Dorsolateral prefrontal cortex (tissue), 120 donors: ENCODE measurements at regions of chr14 and their contacts with region 1.

Region 1: DNA sequence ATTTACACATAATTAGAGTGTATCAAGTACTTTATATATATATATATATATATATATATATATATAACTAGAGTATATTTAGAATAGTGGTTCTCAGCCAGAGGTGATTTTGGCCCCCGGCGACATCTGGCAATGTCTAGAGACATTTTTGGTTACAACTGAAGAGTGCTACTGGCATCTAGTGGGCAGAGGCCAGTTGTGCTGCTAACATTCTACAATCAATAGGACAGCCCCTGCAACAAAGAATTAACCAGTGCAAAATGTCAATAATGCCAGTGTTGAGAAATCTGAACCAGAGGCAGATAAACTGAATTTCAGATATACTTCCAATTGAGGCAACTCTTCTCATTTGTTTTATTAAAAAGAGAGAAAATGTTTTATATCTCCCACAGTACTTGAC is 8.9 kb downstream of the GTF2A1 start:
- DNase-seq: peak in 4 of 10 donors; percentile 41 to 68 (median 52)
- H3K4me3 ChIP-seq: no peak overlapping the region
- H3K27ac ChIP-seq: peak overlapping the region in 5 of 59 donors; percentile 5 to 44 (median 18)
- H3K27me3 ChIP-seq: no peaks in the 10 kb centered on the region
- CTCF ChIP-seq: peak in 54 of 56 donors; percentile 26 to 76 (median 56)

Region 2: GRCh38 chr14:80024417-80024816 is 1187.4 kb before region 1 on chr14:
- intact Hi-C with region 1: no loop called
- DNase-seq: no peak
- H3K4me3 ChIP-seq: no peak overlapping the region
- H3K27ac ChIP-seq: no peak overlapping the region
- H3K27me3 ChIP-seq: no peaks in the 10 kb centered on the region
- CTCF ChIP-seq: no peak

Region 3: DNA sequence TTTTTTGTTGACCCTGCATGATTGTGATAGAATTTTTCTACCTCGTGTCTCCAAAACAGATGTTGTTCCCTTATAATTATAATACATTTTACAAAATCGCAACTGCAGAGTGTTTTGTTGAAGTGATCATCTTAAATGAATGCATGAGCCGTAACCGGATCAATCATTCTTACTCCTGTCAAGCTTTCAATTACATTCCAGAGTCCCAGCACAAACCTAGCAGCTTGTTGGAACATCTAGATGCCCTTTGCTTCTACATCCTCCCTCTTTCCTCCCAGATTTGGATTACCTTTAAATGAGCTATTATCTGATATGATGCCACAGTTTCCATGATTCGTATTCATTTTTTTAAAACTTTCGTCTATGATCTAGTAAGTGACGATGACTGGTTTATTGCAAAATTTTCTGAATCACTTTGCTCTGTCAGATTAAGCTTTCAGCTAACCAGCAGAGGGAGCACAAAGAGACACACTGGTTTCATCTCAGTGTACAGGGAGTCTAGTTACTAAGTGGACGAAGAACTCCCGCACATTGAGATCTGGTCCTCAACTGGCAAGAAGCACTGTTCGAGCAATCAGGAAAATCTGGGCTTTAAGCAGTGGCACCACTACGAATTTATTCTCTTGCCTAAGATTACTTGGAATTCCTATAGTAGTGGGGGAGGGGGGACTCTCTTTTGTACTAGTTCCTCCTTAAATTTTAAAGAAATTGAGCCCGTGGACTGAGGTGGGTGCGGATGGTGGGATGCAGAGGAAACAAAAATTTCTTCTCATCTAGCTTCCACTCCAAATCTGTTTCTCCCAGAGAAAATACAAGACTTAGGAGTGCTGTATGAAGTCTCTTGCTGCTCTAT is 215.6 kb before region 1 on chr14:
- intact Hi-C with region 1: loop called (anchors 5 kb)
- DNase-seq: peak in 3 of 10 donors; percentile 7 to 28 (median 9)
- H3K4me3 ChIP-seq: peak overlapping the region in 21 of 59 donors; percentile 3 to 48 (median 24)
- H3K27ac ChIP-seq: no peak overlapping the region
- H3K27me3 ChIP-seq: peaks cover 0 to 12% (median 0%) of the 10 kb centered on the region in 45 donors
- CTCF ChIP-seq: peak; percentile 48 to 83 (median 69)

Region 4: DNA sequence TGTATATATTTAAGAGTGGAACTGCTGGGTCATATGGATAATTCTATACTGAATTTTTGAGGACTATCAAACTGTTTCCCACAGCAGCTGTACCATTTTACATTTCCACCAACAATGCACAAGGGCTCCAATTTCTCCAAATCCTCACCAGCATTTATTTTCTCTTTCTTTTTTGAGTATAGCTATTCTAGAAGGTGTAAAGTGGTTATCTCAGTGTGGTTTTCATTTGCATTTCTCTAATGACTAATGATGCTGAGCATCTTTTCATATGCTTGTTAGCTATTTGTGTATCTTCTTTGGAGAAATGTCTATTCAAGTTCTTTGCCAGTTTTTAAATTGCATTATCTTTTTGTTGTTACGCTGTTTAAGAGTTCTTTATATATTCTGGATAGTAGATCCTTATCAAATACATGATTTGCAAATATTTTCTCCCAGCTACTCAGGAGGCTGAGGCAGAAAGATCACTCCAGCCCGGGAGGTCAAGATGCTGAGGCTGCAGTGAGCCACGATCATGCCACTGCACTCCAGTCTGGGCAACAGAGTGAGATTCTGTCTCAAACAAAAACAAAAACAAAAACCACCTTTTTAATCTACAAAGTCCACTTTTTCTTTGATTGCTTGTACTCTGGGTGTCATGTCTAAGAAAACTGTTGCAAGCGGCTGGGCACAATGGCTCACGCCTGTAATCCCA is 23.9 kb before region 1 on chr14:
- intact Hi-C with region 1: no loop called
- DNase-seq: no peak
- H3K4me3 ChIP-seq: no peak overlapping the region
- H3K27ac ChIP-seq: no peak overlapping the region
- H3K27me3 ChIP-seq: no peaks in the 10 kb centered on the region
- CTCF ChIP-seq: no peak